ENCODE measurements at regions of chr6 and their contacts with region 1.

Region 1: GRCh38 chr6:30717042-30717844 is at the start of gene MDC1:
- DNase-seq: peak; percentile 100
- ATAC-seq: peak; percentile 78
- H3K4me3 Mint-ChIP-seq: peak within 1 kb of the TSS; percentile 98
- H3K27ac Mint-ChIP-seq: peak within 1 kb of the TSS; percentile 99
- H3K4me1 Mint-ChIP-seq: peaks cover 43% of the 10 kb centered on the region
- H3K27me3 Mint-ChIP-seq: no peaks in the 10 kb centered on the region
- total RNA-seq, gene MDC1: 92.0 to 101 TPM

Region 2: DNA sequence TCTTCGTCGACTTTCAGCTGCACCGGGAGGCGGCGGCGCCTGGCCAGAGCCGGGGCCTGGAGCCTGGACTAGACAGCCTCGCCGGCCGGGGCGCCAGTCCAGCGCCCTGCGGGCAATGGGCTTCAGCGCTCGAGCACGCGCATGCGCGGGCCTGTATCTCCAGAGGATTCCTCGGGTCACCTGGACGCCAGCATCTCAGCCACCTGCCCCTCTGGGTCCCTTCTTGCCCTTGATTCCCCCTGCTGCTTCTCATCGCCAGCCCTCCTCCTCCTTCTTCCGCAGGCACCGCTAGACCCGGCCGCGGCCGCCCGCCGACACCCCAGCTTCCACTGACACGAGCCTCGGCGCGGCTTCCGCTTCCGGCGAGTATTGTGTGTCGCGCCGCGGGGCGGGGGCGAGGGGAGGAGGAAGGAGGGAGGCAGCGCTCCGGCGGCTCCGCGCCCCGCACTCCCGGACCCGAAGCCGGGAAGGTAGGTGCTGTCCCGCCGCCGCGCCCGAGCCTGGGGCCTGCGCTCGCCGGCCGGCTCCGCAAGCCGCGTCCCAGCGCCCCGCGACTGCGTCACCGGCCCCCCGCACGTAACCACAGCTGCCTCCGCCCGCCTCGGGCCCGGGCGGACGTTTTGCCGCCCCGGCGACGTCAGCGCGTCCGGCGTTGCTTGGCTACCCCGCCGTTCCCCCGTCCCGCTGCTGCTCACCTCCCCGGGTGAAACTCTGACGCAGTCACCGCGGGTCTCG is 390.6 kb before region 1 on chr6 and contains the start of gene TRIM39:
- CTCF ChIA-PET with region 1: no interaction called
- POLR2A ChIA-PET with region 1: no interaction called
- intact Hi-C with region 1: loop called in 1 of 2 experiments (anchors 1 kb)
- DNase-seq: peak; percentile 93
- ATAC-seq: peak; percentile 60
- H3K4me3 Mint-ChIP-seq: peak within 1 kb of the TSS; percentile 86
- H3K27ac Mint-ChIP-seq: peak within 1 kb of the TSS; percentile 97
- H3K4me1 Mint-ChIP-seq: peaks cover 54% of the 10 kb centered on the region
- H3K27me3 Mint-ChIP-seq: no peaks in the 10 kb centered on the region
- total RNA-seq, gene TRIM39: 16.5 to 17.5 TPM

Region 3: DNA sequence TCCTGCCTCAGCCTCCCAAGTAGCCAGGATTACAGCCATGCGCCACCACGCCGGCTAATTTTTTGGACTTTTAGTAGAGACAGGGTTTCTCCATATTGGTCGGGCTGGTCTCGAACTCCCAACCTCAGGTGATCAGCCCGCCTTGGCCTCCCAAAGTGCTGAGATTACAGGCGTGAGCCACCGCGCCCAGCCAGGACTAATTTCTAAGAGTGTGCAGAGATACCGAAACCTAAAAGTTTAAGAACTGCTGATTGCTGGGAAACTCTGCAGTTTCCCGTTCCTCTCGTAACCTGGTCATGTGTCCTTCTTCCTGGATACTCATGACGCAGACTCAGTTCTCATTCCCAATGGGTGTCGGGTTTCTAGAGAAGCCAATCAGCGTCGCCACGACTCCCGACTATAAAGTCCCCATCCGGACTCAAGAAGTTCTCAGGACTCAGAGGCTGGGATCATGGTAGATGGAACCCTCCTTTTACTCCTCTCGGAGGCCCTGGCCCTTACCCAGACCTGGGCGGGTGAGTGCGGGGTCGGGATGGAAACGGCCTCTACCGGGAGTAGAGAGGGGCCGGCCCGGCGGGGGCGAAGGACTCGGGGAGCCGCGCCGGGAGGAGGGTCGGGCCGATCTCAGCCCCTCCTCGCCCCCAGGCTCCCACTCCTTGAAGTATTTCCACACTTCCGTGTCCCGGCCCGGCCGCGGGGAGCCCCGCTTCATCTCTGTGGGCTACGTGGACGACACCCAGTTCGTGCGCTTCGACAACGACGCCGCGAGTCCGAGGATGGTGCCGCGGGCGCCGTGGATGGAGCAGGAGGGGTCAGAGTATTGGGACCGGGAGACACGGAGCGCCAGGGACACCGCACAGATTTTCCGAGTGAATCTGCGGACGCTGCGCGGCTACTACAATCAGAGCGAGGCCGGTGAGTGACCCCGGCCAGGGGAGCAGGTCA is 227.9 kb before region 1 on chr6 and contains the start of gene HLA-E:
- CTCF ChIA-PET with region 1: interaction called, 3 read pairs
- POLR2A ChIA-PET with region 1: no interaction called
- intact Hi-C with region 1: loop called (anchors 1 to 5 kb)
- DNase-seq: peak; percentile 92
- ATAC-seq: peak; percentile 78
- H3K4me3 Mint-ChIP-seq: peak within 1 kb of the TSS; percentile 95
- H3K27ac Mint-ChIP-seq: peak within 1 kb of the TSS; percentile 98
- H3K4me1 Mint-ChIP-seq: peaks cover 43% of the 10 kb centered on the region
- H3K27me3 Mint-ChIP-seq: no peaks in the 10 kb centered on the region
- total RNA-seq, gene HLA-E: 451 to 502 TPM

Region 4: DNA sequence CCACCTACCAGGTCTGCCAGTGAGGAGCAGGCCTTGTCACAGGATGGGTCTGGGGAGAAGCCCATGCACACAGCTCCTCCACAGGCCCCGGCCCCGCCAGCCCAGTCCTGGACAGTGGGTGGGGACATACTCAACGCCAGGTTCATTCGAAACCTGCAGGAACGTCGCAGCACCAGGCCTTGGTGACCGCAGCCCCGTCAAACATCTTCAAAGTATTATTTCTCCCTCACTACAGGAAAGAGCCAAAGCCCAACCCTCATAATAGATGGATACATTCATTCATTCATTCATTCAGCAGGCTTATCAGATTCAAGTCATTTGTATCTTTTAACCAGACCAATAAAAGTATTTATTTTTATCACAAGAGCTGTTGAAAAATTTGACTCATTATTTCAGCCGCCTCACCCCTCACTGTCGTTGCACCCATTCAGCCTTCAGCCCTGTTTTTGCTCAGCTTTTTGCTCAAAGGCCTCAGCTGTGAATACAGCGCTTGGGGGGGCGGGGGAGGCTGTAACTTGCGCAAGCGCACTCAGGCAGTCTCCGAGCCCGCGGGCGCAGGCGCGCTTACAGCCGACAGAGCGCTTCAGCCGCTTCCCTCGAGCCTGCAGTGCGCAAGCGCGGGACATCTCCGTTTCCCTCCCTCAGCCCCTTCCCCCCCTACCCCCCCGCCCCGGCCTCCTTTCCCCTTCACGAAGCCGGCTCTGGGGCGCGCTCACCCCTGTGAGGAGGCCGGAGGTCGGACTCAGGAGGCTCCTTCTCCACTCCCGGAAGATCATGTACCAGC is 70.6 kb before region 1 on chr6 and contains the start of gene C6orf136:
- CTCF ChIA-PET with region 1: no interaction called
- POLR2A ChIA-PET with region 1: interaction called, 4 read pairs
- intact Hi-C with region 1: loop called (anchors 1 to 2 kb)
- DNase-seq: peak; percentile 97
- ATAC-seq: peak; percentile 86
- H3K4me3 Mint-ChIP-seq: peak within 1 kb of the TSS; percentile 78
- H3K27ac Mint-ChIP-seq: peak within 1 kb of the TSS; percentile 88
- H3K4me1 Mint-ChIP-seq: peaks cover 20% of the 10 kb centered on the region
- H3K27me3 Mint-ChIP-seq: no peaks in the 10 kb centered on the region
- total RNA-seq, gene C6orf136: 26.5 to 30.8 TPM

Region 5: DNA sequence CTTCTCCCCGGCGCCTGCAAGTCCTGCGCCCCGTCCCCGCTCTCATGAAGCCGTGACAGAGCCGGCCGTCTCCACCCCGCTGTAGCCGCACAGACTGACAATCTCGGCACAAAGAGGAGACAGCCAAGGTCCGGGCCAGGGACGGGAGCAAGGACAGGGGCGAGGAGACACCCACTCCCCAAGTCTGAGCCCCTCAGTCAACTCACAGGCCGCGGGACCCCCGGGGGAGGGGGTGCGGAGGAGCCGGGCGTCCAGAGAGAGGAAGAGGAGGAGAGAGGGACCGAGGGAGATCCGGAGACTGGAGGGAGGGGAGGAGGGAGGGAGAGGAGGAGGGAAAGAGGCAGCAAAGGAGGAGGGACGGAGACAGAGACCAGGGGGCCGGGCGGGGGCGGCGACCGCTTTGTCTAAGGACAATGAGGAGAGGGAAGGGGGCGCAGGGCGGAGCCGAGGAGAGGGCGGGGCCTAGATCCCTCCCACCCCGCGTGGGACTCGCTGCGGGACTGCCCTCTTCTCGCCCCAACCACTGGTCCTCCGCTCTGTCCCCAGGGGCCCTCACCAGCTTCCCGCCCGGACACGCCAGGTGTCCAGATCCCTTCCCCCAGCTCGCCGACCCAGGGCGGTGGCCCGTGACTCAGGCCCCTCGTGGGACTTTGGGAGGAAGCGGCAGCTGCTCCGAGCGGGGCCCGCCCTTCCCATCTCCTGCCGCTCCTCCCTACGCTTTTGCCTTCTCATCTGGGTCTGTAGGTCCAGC is 30.2 kb before region 1 on chr6:
- CTCF ChIA-PET with region 1: interaction called, 97 read pairs
- POLR2A ChIA-PET with region 1: interaction called, 20 read pairs
- intact Hi-C with region 1: loop called (anchors 1 kb)
- DNase-seq: peak; percentile 90
- ATAC-seq: peak; percentile 20
- H3K4me3 Mint-ChIP-seq: peak overlapping the region; percentile 100
- H3K27ac Mint-ChIP-seq: peak overlapping the region; percentile 89
- H3K4me1 Mint-ChIP-seq: peaks cover 42% of the 10 kb centered on the region
- H3K27me3 Mint-ChIP-seq: no peaks in the 10 kb centered on the region

Region 6: GRCh38 chr6:30769088-30769852 is 52.0 kb after region 1 on chr6:
- CTCF ChIA-PET with region 1: interaction called, 3 read pairs
- POLR2A ChIA-PET with region 1: interaction called, 4 read pairs
- intact Hi-C with region 1: loop called in 1 of 2 experiments (anchors 1 kb)
- DNase-seq: peak; percentile 90
- ATAC-seq: peak; percentile 75
- H3K4me3 Mint-ChIP-seq: peak overlapping the region; percentile 63
- H3K27ac Mint-ChIP-seq: peak overlapping the region; percentile 98
- H3K4me1 Mint-ChIP-seq: peaks cover 86% of the 10 kb centered on the region
- H3K27me3 Mint-ChIP-seq: no peaks in the 10 kb centered on the region

Measured in activated CD4-positive, alpha-beta T cell treated with anti-CD3 and anti-CD28 coated beads for 36 hours (primary cell).